ENCODE measurements at regions of chr1 and their contacts with region 1.

Region 1: GRCh38 chr1:112722601-112723510 is 7.7 kb upstream of the PPM1J start:
- DNase-seq: no peak
- ATAC-seq: no peak
- H3K4me3 Mint-ChIP-seq: no peak overlapping the region
- H3K27ac Mint-ChIP-seq: no peak overlapping the region
- H3K4me1 Mint-ChIP-seq: peaks cover 12% of the 10 kb centered on the region
- H3K27me3 Mint-ChIP-seq: peaks cover 29% of the 10 kb centered on the region
- CTCF ChIP-seq: no peak

Region 2: DNA sequence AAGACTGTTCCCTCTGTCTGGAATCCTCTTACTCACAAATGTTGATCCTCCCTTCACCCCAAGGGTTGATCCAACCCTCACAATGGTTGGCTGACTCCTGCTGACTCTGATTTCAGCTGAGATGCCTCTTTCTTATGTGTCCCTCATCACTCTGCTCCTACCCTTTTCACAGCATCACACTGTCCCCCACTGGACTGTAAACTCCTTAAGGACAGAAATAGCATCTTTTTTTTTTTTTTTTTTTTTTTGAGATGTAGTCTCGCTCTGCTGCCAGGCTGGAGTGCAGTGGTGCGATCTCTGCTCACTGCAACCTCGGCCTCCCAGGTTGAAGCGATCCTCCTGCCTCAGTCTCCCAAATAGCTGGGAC is 1528.7 kb after region 1 on chr1:
- CTCF ChIA-PET with region 1: no interaction called
- POLR2A ChIA-PET with region 1: interaction called, 16 read pairs
- intact Hi-C with region 1: no loop called
- DNase-seq: no peak
- ATAC-seq: no peak
- H3K4me3 Mint-ChIP-seq: no peak overlapping the region
- H3K27ac Mint-ChIP-seq: no peak overlapping the region
- H3K4me1 Mint-ChIP-seq: no peaks in the 10 kb centered on the region
- H3K27me3 Mint-ChIP-seq: peaks cover 4% of the 10 kb centered on the region
- CTCF ChIP-seq: no peak

Measured in activated B cell treated with CpG ODN at 0.5 μM for 24 hours (primary cell).